ENCODE measurements at regions of chr3 and their contacts with region 1.

Region 1: DNA sequence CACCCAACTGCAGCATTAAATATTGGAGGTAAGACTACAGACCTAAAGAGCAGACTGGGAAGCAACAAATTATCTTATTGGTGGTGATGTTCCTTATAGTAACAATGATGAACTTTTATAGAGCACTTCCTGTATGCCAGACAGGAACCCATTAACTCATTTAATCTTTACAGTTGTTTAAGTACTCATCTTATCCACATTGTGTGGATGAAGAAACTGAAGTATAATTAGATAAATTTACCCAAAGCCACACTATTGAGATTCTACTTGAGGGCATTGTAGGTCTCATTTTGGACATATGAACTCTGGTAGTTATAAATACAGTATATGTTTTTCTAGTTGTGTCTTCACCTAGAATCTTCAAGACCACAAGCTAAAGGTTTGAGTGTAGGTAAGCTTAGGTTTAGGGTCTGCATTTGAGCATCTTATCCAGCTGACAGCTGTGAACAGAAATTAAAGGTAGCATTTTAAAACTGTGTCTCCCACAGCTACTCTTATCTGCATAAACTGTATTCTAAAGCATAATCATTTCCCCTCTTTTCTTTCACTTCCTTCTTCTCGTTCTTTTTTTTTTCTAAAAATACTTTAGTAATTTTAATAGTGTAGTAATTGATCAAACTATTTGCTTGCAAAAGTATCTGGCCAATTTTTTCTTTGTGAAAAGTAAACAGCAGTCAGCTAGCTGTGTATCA is 138.2 kb downstream of the UBE2E2 start:
- DNase-seq: peak; percentile 47
- ATAC-seq: peak; percentile 67
- H3K4me3 ChIP-seq: peak overlapping the region in 2 of 5 experiments; percentile 7 to 34
- H3K4me3 Mint-ChIP-seq: peak overlapping the region; percentile 56
- H3K27ac ChIP-seq: peak overlapping the region; percentile 17 to 72
- H3K27ac Mint-ChIP-seq: peak overlapping the region; percentile 73
- H3K4me1 ChIP-seq: peaks cover 18 to 35% of the 10 kb centered on the region in 2 donors
- H3K4me1 Mint-ChIP-seq: peaks cover 45% of the 10 kb centered on the region
- H3K27me3 ChIP-seq: no peaks in the 10 kb centered on the region
- H3K27me3 Mint-ChIP-seq: no peaks in the 10 kb centered on the region
- CTCF ChIP-seq: no peak

Region 2: DNA sequence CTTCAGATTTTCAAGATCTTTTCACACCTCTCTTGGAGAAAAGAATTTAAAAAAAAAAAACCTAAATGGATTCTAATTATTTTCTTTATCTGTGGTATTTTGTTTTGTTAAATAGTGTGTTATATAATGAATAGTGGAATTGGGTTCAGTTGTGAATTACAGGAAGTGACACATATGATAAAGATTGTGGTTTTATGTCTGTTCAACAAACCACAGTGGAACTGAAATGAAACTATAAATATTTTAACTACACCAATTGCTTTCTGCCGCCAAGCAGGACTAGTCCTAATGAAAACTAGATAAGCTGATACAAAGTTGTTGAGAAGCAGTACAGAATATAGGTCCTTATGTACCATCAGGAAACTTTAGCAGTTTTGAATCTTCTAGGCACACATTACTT is 16.5 kb before region 1 on chr3:
- CTCF ChIA-PET with region 1: interaction called, 4 read pairs
- POLR2A ChIA-PET with region 1: no interaction called
- intact Hi-C with region 1: loop called (anchors 2 kb)
- DNase-seq: peak; percentile 52
- ATAC-seq: peak; percentile 58
- H3K4me3 ChIP-seq: peak overlapping the region in 1 of 5 experiments; percentile 13
- H3K4me3 Mint-ChIP-seq: peak overlapping the region; percentile 63
- H3K27ac ChIP-seq: peak overlapping the region in 1 of 2 donors; percentile 27
- H3K27ac Mint-ChIP-seq: no peak overlapping the region
- H3K4me1 ChIP-seq: peaks cover 7 to 29% of the 10 kb centered on the region in 2 donors
- H3K4me1 Mint-ChIP-seq: peaks cover 52% of the 10 kb centered on the region
- H3K27me3 ChIP-seq: no peaks in the 10 kb centered on the region
- H3K27me3 Mint-ChIP-seq: no peaks in the 10 kb centered on the region
- CTCF ChIP-seq: no peak

Measured in B cell (primary cell).